GM18951 (cell line): ENCODE measurements at regions of chr6 and their contacts with region 1.

Region 1: GRCh38 chr6:127855542-127856159 is 45.2 kb downstream of the THEMIS start:
- POLR2A ChIP-seq: no peak

Region 2: GRCh38 chr6:128520436-128521281 is 665.0 kb after region 1 on chr6 and contains the start of gene PTPRK:
- in situ Hi-C with region 1: loop called (anchors 25 kb)
- POLR2A ChIP-seq: peak; percentile 84